WTC11 (cell line): ENCODE measurements at regions of chr16 and their contacts with region 1.

Region 1: DNA sequence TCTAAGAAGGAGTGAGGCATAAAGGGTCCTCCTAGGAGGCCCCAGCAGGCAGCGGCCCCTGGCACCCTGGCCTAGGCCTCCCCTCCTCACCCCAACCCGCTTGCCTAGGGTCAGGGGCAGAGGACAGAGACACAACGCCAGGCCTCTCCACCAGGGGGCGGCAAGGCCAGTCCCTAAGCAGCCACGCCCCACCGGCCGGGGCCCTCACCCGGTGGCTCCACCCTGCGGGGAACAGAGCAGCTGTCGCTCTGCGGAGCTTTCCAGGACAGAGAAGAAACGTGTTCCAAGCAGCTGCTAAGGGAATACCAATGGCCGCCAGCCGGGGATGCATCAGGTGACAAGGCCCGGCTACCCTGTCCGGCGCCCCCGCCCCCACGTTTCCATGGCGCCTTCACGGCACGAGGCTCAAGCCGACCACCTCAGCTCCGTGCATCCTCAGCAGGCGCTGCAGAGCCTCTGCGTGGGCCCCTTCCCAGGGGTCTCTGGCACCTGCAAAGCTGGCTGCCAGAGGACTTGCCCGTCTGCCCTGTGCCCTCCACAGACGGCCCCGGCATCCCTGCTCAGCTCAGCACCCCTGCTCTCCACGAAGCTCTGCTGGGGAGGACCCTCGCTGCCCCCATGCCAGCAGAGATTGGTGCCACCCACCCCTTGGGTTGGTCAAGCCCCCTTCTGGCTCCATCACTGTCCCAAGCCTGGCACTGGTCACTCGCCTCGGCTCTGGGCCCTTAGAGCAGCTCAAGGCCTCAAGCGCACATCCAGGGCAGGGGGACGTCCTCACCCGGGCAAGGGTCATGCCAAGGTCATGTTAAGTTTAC is 5.6 kb downstream of the ZNF598 start:
- DNase-seq: peak; percentile 99
- ATAC-seq: peak; percentile 94
- H3K4me3 Mint-ChIP-seq: peak overlapping the region; percentile 27; the same call in 1 of the 2 replicates
- H3K27ac Mint-ChIP-seq: no peak overlapping the region
- H3K4me1 Mint-ChIP-seq: peaks cover 35% of the 10 kb centered on the region
- H3K27me3 Mint-ChIP-seq: no peaks in the 10 kb centered on the region
- CTCF ChIP-seq: peak; percentile 92

Region 2: GRCh38 chr16:1964506-1965395 is 39.3 kb before region 1 on chr16 and contains the start of gene RPS2:
- CTCF ChIA-PET with region 1: interaction called, 12 read pairs
- POLR2A ChIA-PET with region 1: interaction called, 7 read pairs
- DNase-seq: peak; percentile 99
- ATAC-seq: peak; percentile 51
- H3K4me3 Mint-ChIP-seq: peak within 1 kb of the TSS; percentile 94
- H3K27ac Mint-ChIP-seq: peak within 1 kb of the TSS; percentile 97
- H3K4me1 Mint-ChIP-seq: peaks cover 39% of the 10 kb centered on the region
- H3K27me3 Mint-ChIP-seq: no peaks in the 10 kb centered on the region
- CTCF ChIP-seq: no peak
- total RNA-seq, gene RPS2: 4,395 to 4,767 TPM (median 4,632 TPM) in 3 replicates

Region 3: DNA sequence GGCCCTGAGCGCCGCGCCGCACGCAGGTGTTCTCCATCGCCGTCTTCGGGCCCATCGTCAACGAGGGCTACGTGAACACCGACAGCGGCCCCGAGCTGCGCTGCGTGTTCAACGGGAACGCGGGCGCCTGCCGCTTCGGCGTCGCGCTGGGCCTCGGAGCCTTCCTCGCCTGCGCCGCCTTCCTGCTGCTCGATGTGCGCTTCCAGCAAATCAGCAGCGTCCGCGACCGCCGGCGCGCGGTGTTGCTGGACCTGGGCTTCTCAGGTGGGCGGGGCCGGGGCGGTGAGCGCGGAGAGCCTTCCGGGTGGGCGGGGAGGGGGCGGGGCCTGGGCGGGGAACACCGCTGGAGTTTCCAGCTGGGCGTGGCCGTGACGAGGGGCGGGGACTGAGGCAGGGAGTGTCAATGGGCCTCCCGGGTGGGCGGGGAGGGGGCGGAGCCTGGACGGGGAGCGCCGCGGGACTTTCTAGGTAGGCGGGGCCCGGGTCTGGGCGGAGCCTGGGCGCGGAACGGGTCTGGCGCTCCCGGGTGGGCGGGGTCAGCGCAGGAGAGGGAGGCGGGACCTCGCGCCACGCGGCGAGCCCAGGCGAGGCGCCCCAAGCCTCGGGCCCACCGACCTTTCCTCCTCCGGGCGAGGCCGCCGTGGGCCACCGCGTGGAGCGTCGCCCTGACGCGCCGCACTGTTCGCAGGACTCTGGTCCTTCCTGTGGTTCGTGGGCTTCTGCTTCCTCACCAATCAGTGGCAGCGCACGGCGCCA is 11.9 kb before region 1 on chr16:
- CTCF ChIA-PET with region 1: interaction called, 59 read pairs
- POLR2A ChIA-PET with region 1: interaction called, 13 read pairs
- DNase-seq: peak; percentile 99
- ATAC-seq: peak; percentile 72
- H3K4me3 Mint-ChIP-seq: peak overlapping the region; percentile 76
- H3K27ac Mint-ChIP-seq: no peak overlapping the region
- H3K4me1 Mint-ChIP-seq: peaks cover 17% of the 10 kb centered on the region
- H3K27me3 Mint-ChIP-seq: peaks cover 24% of the 10 kb centered on the region
- CTCF ChIP-seq: no peak

Region 4: GRCh38 chr16:2023098-2023925 is 19.3 kb after region 1 on chr16:
- CTCF ChIA-PET with region 1: interaction called, 42 read pairs
- POLR2A ChIA-PET with region 1: interaction called, 4 read pairs
- DNase-seq: peak; percentile 98
- ATAC-seq: peak; percentile 57
- H3K4me3 Mint-ChIP-seq: peak overlapping the region; percentile 77
- H3K27ac Mint-ChIP-seq: peak overlapping the region; percentile 95; the same call in 1 of the 2 replicates
- H3K4me1 Mint-ChIP-seq: peaks cover 14% of the 10 kb centered on the region
- H3K27me3 Mint-ChIP-seq: peaks cover 72% of the 10 kb centered on the region
- CTCF ChIP-seq: peak; percentile 98

Region 5: DNA sequence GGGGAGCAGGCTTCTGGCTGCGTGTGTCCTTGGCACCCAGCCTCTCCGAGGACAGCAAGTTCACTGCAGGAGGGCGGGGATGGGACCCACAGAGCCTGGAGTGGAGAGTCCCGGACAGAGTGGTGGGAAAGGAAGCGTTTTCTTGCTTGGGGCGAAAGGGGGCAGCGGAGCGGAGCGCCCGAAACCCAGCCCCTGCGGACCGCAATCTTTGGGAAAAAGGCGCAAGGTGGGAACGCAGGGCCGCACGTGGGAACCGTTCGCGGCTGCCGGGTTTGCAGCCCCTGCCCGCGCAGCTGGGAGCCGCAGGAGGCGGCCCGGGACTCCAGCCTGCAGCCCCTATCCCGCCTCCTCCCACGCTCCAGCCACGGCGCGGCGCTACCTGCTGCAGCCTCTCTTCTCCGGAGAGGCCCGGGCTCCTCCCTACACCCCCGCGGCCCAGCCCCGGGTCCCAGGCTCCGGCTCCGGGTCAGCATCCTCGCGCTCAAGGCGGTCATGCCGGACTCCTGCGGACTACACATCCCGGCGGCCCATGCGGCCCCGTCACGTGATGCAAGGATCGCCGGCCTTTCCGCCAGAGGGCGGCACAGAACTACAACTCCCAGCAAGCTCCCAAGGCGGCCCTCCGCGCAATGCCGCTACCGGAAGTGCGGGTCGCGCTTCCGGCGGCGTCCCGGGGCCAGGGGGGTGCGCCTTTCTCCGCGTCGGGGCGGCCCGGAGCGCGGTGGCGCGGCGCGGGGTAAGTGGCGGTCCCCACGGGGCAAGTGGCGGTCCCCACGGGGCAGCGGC is 43.5 kb after region 1 on chr16 and contains the starts of genes NTHL1 and TSC2:
- CTCF ChIA-PET with region 1: interaction called, 23 read pairs
- POLR2A ChIA-PET with region 1: interaction called, 3 read pairs
- DNase-seq: peak; percentile 99
- ATAC-seq: peak; percentile 95
- H3K4me3 Mint-ChIP-seq: peak within 1 kb of the TSS; percentile 91
- H3K27ac Mint-ChIP-seq: peak within 1 kb of the TSS; percentile 54
- H3K4me1 Mint-ChIP-seq: peaks cover 10% of the 10 kb centered on the region
- H3K27me3 Mint-ChIP-seq: no peaks in the 10 kb centered on the region
- CTCF ChIP-seq: no peak
- total RNA-seq, gene NTHL1: 90.5 to 93.4 TPM (median 93.3 TPM) in 3 replicates
- total RNA-seq, gene TSC2: 103 to 134 TPM (median 117 TPM) in 3 replicates

Region 6: GRCh38 chr16:2085669-2086068 is 81.6 kb after region 1 on chr16:
- CTCF ChIA-PET with region 1: interaction called, 33 read pairs
- POLR2A ChIA-PET with region 1: no interaction called
- DNase-seq: no peak
- ATAC-seq: no peak
- H3K4me3 Mint-ChIP-seq: no peak overlapping the region
- H3K27ac Mint-ChIP-seq: no peak overlapping the region
- H3K4me1 Mint-ChIP-seq: no peaks in the 10 kb centered on the region
- H3K27me3 Mint-ChIP-seq: no peaks in the 10 kb centered on the region
- CTCF ChIP-seq: no peak

Region 7: DNA sequence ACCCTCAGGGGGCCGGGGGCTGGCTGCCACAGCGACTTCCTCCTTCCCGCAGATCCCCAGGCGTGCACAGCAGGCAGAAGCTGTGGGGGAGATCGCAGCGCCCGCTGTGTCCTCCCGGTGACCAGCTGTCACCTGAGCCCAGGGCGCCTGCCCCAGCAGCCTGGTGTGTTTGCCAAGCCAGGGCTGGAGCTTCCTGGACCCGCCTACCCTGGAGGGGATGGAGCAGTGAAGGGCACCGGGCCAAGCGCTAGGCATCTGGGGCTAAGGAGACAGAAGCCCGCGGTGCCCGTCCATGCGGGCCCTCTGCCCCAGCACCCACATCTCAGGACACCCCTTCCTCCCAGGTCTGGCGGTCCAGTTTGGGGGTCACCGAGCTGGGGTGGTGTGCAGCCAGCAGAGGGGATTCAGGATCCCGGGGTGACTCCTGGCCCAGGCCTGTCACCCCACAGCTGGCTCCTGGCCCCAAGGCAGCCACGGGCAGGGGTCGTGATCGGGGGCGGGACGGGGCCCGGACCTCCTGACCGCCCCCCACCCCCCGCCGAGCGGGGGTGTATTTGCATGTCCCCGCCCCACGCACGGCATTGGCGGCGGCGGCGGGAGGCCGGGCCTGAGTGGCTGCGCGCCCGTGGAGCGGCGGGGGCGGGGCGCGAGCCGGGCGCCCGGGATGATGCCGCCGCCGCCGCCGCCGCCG is 144.1 kb after region 1 on chr16 and contains the start of gene RAB26:
- CTCF ChIA-PET with region 1: interaction called, 14 read pairs
- POLR2A ChIA-PET with region 1: interaction called, 6 read pairs
- DNase-seq: peak; percentile 82
- ATAC-seq: 0 out of 2 replicates have a peak, but pooled peaks have one; percentile 0
- H3K4me3 Mint-ChIP-seq: peak within 1 kb of the TSS; percentile 97
- H3K27ac Mint-ChIP-seq: no peak within 1 kb of the TSS
- H3K4me1 Mint-ChIP-seq: peaks cover 28% of the 10 kb centered on the region
- H3K27me3 Mint-ChIP-seq: peaks cover 36% of the 10 kb centered on the region
- CTCF ChIP-seq: no peak
- total RNA-seq, gene RAB26: 6.2 to 7.3 TPM (median 6.9 TPM) in 3 replicates